ENCODE measurements at regions of chr1 and their contacts with region 1.

Region 1: DNA sequence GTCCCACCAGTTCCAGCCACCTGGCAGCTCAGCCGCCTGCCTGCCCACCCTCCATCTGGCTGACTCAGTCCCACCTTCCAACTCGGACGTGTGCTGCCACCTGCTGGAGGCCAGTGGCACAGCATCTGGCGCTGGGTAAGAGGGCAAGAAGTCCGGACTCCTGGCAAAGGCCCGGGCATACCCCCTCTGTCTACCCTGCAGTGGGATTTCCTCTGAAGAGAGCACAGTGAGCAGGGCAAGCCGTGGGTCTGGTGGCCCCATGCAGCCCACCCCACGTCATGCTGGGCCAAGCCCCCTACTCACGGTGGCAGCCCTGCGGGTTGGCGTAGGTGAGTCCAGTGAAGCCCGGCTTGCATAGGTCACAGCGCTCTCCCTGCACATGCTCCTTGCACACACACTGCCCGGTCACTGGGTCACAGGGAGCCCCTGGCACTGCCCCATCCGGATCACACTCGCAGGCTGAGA is 24.5 kb downstream of the LAMB3 start:
- DNase-seq: no peak
- H3K4me3 ChIP-seq: no peak overlapping the region
- CTCF ChIP-seq: peak; percentile 97

Region 2: GRCh38 chr1:209265301-209265700 is 362.5 kb before region 1 on chr1:
- CTCF ChIA-PET with region 1: no interaction called
- POLR2A ChIA-PET with region 1: no interaction called
- DNase-seq: no peak
- H3K4me3 ChIP-seq: no peak overlapping the region
- CTCF ChIP-seq: no peak

Region 3: GRCh38 chr1:209576798-209577197 is 51.0 kb before region 1 on chr1:
- CTCF ChIA-PET with region 1: interaction called, 300 read pairs
- POLR2A ChIA-PET with region 1: no interaction called
- DNase-seq: no peak
- H3K4me3 ChIP-seq: no peak overlapping the region
- CTCF ChIP-seq: peak; percentile 96

Region 4: GRCh38 chr1:209585672-209586071 is 42.1 kb before region 1 on chr1:
- CTCF ChIA-PET with region 1: interaction called, 300 read pairs
- POLR2A ChIA-PET with region 1: no interaction called
- DNase-seq: no peak
- H3K4me3 ChIP-seq: peak overlapping the region; percentile 33
- CTCF ChIP-seq: no peak

Region 5: GRCh38 chr1:209601809-209602657 is 25.7 kb before region 1 on chr1:
- CTCF ChIA-PET with region 1: interaction called, 274 read pairs
- POLR2A ChIA-PET with region 1: no interaction called
- DNase-seq: no peak
- H3K4me3 ChIP-seq: no peak overlapping the region
- CTCF ChIP-seq: peak; percentile 77

Region 6: GRCh38 chr1:209643285-209644020 is 15.7 kb after region 1 on chr1:
- CTCF ChIA-PET with region 1: interaction called, 39 read pairs
- POLR2A ChIA-PET with region 1: no interaction called
- DNase-seq: no peak
- H3K4me3 ChIP-seq: no peak overlapping the region
- CTCF ChIP-seq: no peak

Region 7: GRCh38 chr1:209651148-209651547 is 23.4 kb after region 1 on chr1:
- CTCF ChIA-PET with region 1: interaction called, 39 read pairs
- POLR2A ChIA-PET with region 1: no interaction called
- DNase-seq: no peak
- H3K4me3 ChIP-seq: no peak overlapping the region
- CTCF ChIP-seq: no peak